ENCODE measurements at regions of chr3 and their contacts with region 1.

Region 1: DNA sequence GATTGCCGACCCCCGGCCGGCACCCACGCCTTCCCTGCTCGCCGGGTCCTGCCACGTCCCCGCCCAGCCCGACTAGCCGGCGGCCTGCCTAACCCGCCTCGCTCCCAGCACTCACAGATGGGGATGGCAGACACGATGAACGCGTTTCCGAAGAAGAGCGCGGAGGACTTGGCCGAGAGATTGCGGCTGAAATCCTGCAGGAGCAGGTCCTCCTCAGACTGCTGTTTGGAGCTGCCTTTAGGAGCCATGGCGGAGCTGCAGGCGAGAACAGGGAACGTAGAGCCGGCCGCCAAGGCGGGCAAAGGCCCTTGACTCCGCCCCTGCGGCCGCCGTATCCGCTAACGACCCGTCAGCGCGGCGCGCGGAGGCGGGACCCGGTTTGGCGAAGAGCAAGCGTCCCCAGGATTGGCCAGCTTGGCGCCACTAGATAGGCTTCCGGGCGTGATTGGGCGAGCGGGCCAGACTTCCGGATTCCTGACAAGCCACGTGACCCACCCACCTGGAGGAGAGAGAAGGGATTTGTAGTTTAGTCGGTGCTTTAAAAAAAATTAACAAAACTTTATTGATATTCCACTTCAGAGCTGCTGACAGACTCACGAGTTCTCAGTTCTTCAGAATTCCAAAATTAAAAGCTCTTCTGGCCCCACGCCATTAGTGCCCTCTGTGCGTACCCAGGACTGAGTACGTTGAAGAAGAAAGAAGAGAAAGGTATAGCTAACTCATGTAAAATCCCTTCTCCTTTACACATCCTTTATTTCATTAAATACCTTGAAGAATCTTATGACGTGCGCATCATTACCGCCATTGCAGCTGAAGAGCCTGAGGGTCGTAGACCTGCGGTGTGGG is at the start of gene SSR3:
- DNase-seq: peak; percentile 95 to 100 (median 98)
- ATAC-seq: peak; percentile 98
- H3K4me3 ChIP-seq: peak within 1 kb of the TSS; percentile 65
- H3K4me3 Mint-ChIP-seq: peak within 1 kb of the TSS; percentile 97
- H3K27ac ChIP-seq: peak within 1 kb of the TSS; percentile 48 to 76
- H3K27ac Mint-ChIP-seq: peak within 1 kb of the TSS; percentile 90
- H3K4me1 ChIP-seq: peaks cover 19% of the 10 kb centered on the region
- H3K4me1 Mint-ChIP-seq: peaks cover 52% of the 10 kb centered on the region
- H3K27me3 ChIP-seq: no peaks in the 10 kb centered on the region
- H3K27me3 Mint-ChIP-seq: peaks cover 5% of the 10 kb centered on the region
- CTCF ChIP-seq: no peak
- total RNA-seq, gene SSR3: 78.8 to 79.5 TPM

Region 2: DNA sequence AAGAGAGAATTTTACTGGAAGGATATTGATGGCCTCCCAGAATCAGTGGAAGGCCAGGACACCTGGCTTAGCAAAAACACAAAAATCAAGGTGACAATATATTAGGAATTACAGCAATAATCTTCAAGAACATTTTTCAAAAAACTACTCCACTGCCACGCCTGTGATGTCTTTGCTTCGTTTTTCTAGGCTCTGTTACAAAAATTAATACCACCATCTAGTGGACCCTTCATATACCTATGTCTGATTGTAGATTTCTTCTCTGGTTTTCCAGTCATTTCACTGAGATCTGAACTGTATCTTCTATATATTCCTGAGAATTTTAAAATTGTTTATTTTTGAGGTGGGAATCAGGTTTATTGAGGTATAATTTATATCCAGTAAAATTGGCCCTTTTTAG is 695.2 kb before region 1 on chr3:
- CTCF ChIA-PET with region 1: no interaction called
- POLR2A ChIA-PET with region 1: no interaction called
- intact Hi-C with region 1: loop called in 1 of 2 experiments (anchors 10 kb)
- DNase-seq: peak in 3 of 14 experiments; percentile 26 to 30 (median 26)
- ATAC-seq: no peak
- H3K4me3 ChIP-seq: no peak overlapping the region
- H3K4me3 Mint-ChIP-seq: no peak overlapping the region
- H3K27ac ChIP-seq: no peak overlapping the region
- H3K27ac Mint-ChIP-seq: no peak overlapping the region
- H3K4me1 ChIP-seq: peaks cover 20% of the 10 kb centered on the region
- H3K4me1 Mint-ChIP-seq: peaks cover 3% of the 10 kb centered on the region
- H3K27me3 ChIP-seq: no peaks in the 10 kb centered on the region
- H3K27me3 Mint-ChIP-seq: no peaks in the 10 kb centered on the region
- CTCF ChIP-seq: no peak

Region 3: GRCh38 chr3:156519758-156520162 is 35.3 kb before region 1 on chr3:
- CTCF ChIA-PET with region 1: no interaction called
- POLR2A ChIA-PET with region 1: interaction called, 32 read pairs
- intact Hi-C with region 1: no loop called
- DNase-seq: no peak
- ATAC-seq: no peak
- H3K4me3 ChIP-seq: no peak overlapping the region
- H3K4me3 Mint-ChIP-seq: no peak overlapping the region
- H3K27ac ChIP-seq: no peak overlapping the region
- H3K27ac Mint-ChIP-seq: no peak overlapping the region
- H3K4me1 ChIP-seq: peaks cover 6% of the 10 kb centered on the region
- H3K4me1 Mint-ChIP-seq: peaks cover 11% of the 10 kb centered on the region
- H3K27me3 ChIP-seq: peaks cover 0 to 7% of the 10 kb centered on the region in 2 experiments
- H3K27me3 Mint-ChIP-seq: peaks cover 57% of the 10 kb centered on the region
- CTCF ChIP-seq: no peak

Region 4: GRCh38 chr3:156826144-156826895 is 271.3 kb after region 1 on chr3 and contains the start of gene LEKR1:
- CTCF ChIA-PET with region 1: no interaction called
- POLR2A ChIA-PET with region 1: interaction called, 3 read pairs
- intact Hi-C with region 1: loop called in 1 of 2 experiments (anchors 5 kb)
- DNase-seq: peak; percentile 22 to 90 (median 54)
- ATAC-seq: peak; percentile 54
- H3K4me3 ChIP-seq: peak within 1 kb of the TSS; percentile 87
- H3K4me3 Mint-ChIP-seq: peak within 1 kb of the TSS; percentile 95
- H3K27ac ChIP-seq: peak within 1 kb of the TSS; percentile 73 to 79
- H3K27ac Mint-ChIP-seq: peak within 1 kb of the TSS; percentile 93
- H3K4me1 ChIP-seq: peaks cover 15% of the 10 kb centered on the region
- H3K4me1 Mint-ChIP-seq: peaks cover 16% of the 10 kb centered on the region
- H3K27me3 ChIP-seq: no peaks in the 10 kb centered on the region
- H3K27me3 Mint-ChIP-seq: no peaks in the 10 kb centered on the region
- CTCF ChIP-seq: no peak
- total RNA-seq, gene LEKR1: 0.77 to 1.0 TPM

Region 5: DNA sequence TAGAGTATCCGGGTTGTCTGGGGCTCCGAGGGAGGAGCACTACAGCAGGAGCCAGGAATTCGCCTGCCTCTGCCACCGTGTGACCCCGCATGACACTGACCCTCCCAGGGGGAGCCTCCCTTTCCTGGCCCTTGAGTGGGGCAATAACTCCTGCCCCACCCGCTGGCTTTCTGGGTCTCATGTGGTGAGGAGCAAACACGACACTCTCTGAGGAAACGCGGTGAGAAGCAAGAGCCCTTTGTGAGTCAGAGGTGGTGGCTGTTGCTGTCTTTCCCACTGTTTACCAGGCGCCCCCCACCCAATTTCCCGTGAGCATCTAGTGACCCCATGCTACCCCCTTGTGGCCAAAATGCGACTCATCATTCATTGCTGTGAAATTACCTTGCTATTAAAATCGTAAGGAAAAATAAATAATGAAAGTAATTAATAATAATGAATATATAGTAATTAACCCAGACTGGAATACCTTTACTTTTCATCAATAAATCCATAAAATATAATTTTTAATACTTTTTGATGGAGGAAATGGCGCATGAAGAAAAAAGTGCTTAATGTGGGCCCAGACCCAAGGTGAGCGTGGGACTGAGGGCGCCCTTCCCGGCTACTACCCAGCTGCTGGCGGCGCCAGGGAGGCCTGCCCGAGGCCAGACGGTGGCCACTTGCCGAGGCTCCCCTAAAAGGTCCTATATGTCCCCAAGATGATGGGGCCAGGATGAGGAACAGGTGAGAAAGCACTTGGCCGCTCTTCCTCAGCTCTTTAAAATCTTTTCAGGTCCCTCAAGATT is 575.6 kb after region 1 on chr3:
- CTCF ChIA-PET with region 1: interaction called, 4 read pairs
- POLR2A ChIA-PET with region 1: interaction called, 13 read pairs
- intact Hi-C with region 1: loop called in 1 of 2 experiments (anchors 5 kb)
- DNase-seq: peak; percentile 57 to 94 (median 80)
- ATAC-seq: peak; percentile 69
- H3K4me3 ChIP-seq: peak overlapping the region; percentile 28
- H3K4me3 Mint-ChIP-seq: peak overlapping the region; percentile 80
- H3K27ac ChIP-seq: peak overlapping the region; percentile 80 to 92
- H3K27ac Mint-ChIP-seq: peak overlapping the region; percentile 98
- H3K4me1 ChIP-seq: peaks cover 80% of the 10 kb centered on the region
- H3K4me1 Mint-ChIP-seq: peaks cover 59% of the 10 kb centered on the region
- H3K27me3 ChIP-seq: no peaks in the 10 kb centered on the region
- H3K27me3 Mint-ChIP-seq: no peaks in the 10 kb centered on the region
- CTCF ChIP-seq: peak; percentile 87

Region 6: DNA sequence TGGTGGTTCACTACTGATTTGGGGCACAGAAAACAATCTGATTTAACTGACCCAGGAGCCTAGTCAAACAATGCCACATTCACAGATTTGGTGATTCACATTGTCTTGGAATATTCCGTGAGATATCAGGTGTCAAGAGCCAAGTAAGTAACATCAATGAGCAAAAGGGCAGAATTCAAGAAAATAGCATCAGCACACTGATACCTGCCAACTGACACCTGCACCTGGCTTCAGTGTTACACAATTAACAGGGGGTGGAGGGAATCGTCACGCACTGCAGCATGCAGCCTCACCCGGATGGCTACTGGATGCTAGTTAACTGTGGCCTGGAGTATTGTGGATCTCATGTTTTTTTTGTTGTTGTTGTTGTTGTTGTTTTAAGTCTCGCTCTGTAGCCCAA is 587.2 kb after region 1 on chr3:
- CTCF ChIA-PET with region 1: interaction called, 12 read pairs
- POLR2A ChIA-PET with region 1: interaction called, 4 read pairs
- intact Hi-C with region 1: loop called (anchors 2 to 5 kb)
- DNase-seq: no peak
- ATAC-seq: no peak
- H3K4me3 ChIP-seq: no peak overlapping the region
- H3K4me3 Mint-ChIP-seq: no peak overlapping the region
- H3K27ac ChIP-seq: no peak overlapping the region
- H3K27ac Mint-ChIP-seq: peak overlapping the region; percentile 5
- H3K4me1 ChIP-seq: peaks cover 5% of the 10 kb centered on the region
- H3K4me1 Mint-ChIP-seq: peaks cover 14% of the 10 kb centered on the region
- H3K27me3 ChIP-seq: no peaks in the 10 kb centered on the region
- H3K27me3 Mint-ChIP-seq: no peaks in the 10 kb centered on the region
- CTCF ChIP-seq: no peak

Measured in CD4-positive, alpha-beta T cell (primary cell).